Breast epithelium (tissue), 4 donors: ENCODE measurements at regions of chr16 and their contacts with region 1.

Region 1: GRCh38 chr16:27517664-27518063 is 32.0 kb downstream of the GTF3C1 start:
- DNase-seq: no peak
- H3K4me3 ChIP-seq: no peak overlapping the region
- H3K27ac ChIP-seq: no peak overlapping the region
- H3K4me1 ChIP-seq: no peaks in the 10 kb centered on the region
- H3K27me3 ChIP-seq: no peaks in the 10 kb centered on the region
- CTCF ChIP-seq: no peak
- POLR2A ChIP-seq: no peak

Region 2: GRCh38 chr16:27595993-27596392 is 78.3 kb after region 1 on chr16:
- intact Hi-C with region 1: loop called (anchors 2 kb)
- DNase-seq: no peak
- H3K4me3 ChIP-seq: no peak overlapping the region
- H3K27ac ChIP-seq: no peak overlapping the region
- H3K4me1 ChIP-seq: no peaks in the 10 kb centered on the region
- H3K27me3 ChIP-seq: no peaks in the 10 kb centered on the region
- CTCF ChIP-seq: no peak
- POLR2A ChIP-seq: no peak